ENCODE measurements at regions of chr14 and their contacts with region 1.

Region 1: DNA sequence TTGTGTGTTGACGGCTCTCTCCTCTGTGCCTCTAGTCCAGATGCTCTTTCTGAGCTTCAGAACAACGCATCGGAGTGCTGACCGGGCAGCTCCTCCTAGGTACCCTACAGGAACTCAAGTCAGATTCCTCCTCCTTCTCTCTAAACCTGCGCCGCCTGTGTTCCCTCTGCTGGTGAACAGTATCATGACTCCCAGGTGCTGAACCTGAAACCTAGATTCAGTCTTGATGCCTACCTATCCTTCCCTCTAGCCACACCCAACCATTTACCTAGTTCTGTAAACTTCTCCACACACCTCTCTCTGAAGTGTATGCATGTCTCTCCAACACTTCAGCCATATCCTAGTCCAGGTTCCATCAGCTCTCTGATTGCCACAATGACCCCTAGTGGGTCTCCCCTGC is 112.7 kb downstream of the EFCAB11 start:
- DNase-seq: no peak
- H3K4me3 ChIP-seq: no peak overlapping the region
- H3K27ac ChIP-seq: no peak overlapping the region
- H3K4me1 ChIP-seq: peaks cover 0 to 4% (median 2%) of the 10 kb centered on the region in 4 donors
- H3K27me3 ChIP-seq: no peaks in the 10 kb centered on the region
- CTCF ChIP-seq: peak in 2 of 5 experiments; percentile 9 to 17
- EP300 ChIP-seq: no peak
- POLR2A ChIP-seq: no peak

Region 2: GRCh38 chr14:89794096-89794495 is 47.8 kb before region 1 on chr14:
- in situ Hi-C with region 1: no loop called
- intact Hi-C with region 1: loop called (anchors 1 kb)
- DNase-seq: no peak
- H3K4me3 ChIP-seq: no peak overlapping the region
- H3K27ac ChIP-seq: peak overlapping the region in 2 of 4 donors; percentile 21 to 54
- H3K4me1 ChIP-seq: no peaks in the 10 kb centered on the region
- H3K27me3 ChIP-seq: no peaks in the 10 kb centered on the region
- CTCF ChIP-seq: no peak
- EP300 ChIP-seq: no peak
- POLR2A ChIP-seq: no peak